HEK293T (cell line): ENCODE measurements at regions of chr14 and their contacts with region 1.

Region 1: DNA sequence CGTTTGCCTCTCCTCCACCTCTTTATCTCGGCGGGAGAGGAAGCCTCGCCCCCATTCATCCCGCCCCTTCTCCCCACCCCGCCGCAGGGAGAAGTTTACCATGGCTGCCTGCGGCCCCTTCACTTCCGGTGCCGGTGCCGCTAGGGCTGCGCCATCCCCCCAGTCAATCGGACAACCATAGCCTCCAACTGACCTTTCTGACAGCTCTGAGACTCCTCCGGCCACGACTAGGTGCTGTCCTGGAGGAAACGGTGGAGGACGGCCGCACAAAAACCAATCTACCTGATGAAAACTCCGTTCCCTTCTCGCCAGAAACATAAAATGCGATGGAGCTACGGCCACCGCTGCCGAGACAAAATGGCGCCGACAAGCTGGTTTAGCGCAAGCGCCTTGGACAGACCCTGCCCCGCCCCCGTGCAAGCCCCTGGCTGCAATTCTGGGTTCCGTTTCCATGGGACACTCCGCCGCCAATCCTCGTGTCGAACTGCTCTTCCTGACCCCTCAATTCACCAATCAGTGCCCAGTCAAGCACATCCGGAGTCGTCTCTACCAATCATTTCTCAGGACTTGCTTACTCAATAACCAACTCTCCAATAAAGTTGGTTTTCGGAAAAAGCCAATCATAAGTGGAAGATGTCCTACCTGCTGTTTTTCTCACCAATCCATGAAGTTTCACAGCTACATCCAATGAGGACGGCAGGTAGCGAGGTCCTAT is 436 bp upstream of the ARID4A start:
- DNase-seq: peak; percentile 94

Region 2: GRCh38 chr14:58244556-58245387 is 53.1 kb before region 1 on chr14 and contains the start of gene PSMA3:
- CTCF ChIA-PET with region 1: no interaction called
- POLR2A ChIA-PET with region 1: interaction called, 32 read pairs
- DNase-seq: peak; percentile 94

Region 3: GRCh38 chr14:58280954-58281787 is 16.7 kb before region 1 on chr14:
- CTCF ChIA-PET with region 1: no interaction called
- POLR2A ChIA-PET with region 1: interaction called, 11 read pairs
- DNase-seq: no peak

Region 4: GRCh38 chr14:58327019-58327418 is 29.1 kb after region 1 on chr14:
- CTCF ChIA-PET with region 1: no interaction called
- POLR2A ChIA-PET with region 1: interaction called, 10 read pairs
- DNase-seq: no peak

Region 5: DNA sequence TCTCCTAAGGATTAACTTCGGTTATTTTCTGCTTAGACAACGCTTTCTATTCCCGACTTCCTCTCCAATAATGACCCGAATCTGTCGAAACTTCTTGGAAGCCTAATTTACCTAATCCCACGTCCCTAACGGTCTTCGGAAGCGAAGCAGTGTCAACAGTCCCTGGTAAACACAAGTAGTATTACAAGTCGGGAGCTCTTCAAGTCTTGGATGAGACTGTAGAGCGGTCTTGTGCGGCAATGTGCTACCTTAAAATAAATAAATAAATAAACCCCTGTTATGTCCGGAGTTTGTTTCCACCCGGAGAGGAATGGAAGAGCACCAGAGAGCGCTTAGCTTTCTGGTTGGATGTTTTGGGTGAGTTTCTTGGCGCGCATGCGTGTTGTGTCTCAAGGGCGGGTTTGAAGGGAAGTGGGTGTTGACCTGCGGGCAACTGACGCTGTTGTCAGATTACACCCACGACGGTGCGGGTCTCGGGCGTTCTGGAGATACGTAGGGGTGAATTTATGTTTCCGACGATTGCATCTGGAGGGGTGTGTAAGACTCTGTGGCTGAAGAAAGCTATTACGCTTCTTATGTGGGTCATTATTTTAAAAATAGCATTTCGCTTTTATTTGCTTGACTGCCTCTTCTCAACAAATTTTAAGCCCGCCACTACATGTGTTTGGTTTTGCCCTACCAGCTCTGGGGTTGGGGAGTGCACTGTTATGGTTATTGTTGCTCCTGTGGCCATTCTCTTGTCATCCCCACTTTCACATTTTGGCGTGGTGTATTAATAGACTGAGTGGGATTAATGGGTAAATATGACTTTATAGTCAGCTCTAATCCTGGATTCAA is 129.6 kb after region 1 on chr14 and contains the starts of genes KIAA0586 and TIMM9:
- CTCF ChIA-PET with region 1: no interaction called
- POLR2A ChIA-PET with region 1: interaction called, 14 read pairs
- DNase-seq: peak; percentile 95